HEK293 (cell line): ENCODE measurements at regions of chr10 and their contacts with region 1.

Region 1: GRCh38 chr10:69957886-69958555 is 94.6 kb upstream of the MACROH2A2 start:
- H3K4me3 ChIP-seq: no peak overlapping the region
- H3K27ac ChIP-seq: no peak overlapping the region
- H3K4me1 ChIP-seq: no peaks in the 10 kb centered on the region
- CTCF ChIP-seq: peak; percentile 53

Region 2: GRCh38 chr10:69786791-69787190 is 171.2 kb before region 1 on chr10:
- CTCF ChIA-PET with region 1: interaction called, 36 read pairs
- POLR2A ChIA-PET with region 1: no interaction called
- H3K4me3 ChIP-seq: no peak overlapping the region
- H3K27ac ChIP-seq: no peak overlapping the region
- H3K4me1 ChIP-seq: no peaks in the 10 kb centered on the region
- CTCF ChIP-seq: no peak

Region 3: DNA sequence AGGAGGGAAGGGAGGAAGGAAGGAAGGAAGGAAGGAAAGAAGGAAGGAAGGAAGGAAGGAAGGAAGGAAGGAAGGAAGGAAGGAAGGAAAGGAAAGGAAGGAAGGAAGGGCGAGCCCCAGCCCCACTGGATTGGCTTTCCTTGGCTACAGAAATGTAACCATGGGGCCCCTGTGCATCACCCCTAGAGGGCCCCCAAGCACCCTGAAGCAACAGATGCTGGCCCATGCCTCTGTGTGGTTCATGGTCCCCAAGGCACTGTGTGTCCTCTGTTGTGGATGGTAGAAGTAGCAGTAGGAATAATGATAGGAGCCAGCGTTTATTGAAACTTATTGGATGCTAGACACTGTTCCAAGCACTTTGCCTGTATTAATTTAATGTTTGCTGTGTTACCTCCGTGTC is 21.9 kb before region 1 on chr10:
- CTCF ChIA-PET with region 1: interaction called, 13 read pairs
- POLR2A ChIA-PET with region 1: no interaction called
- H3K4me3 ChIP-seq: no peak overlapping the region
- H3K27ac ChIP-seq: no peak overlapping the region
- H3K4me1 ChIP-seq: no peaks in the 10 kb centered on the region
- CTCF ChIP-seq: no peak

Region 4: GRCh38 chr10:69968830-69969229 is 10.8 kb after region 1 on chr10:
- CTCF ChIA-PET with region 1: interaction called, 18 read pairs
- POLR2A ChIA-PET with region 1: no interaction called
- H3K4me3 ChIP-seq: no peak overlapping the region
- H3K27ac ChIP-seq: no peak overlapping the region
- H3K4me1 ChIP-seq: no peaks in the 10 kb centered on the region
- CTCF ChIP-seq: peak; percentile 74

Region 5: DNA sequence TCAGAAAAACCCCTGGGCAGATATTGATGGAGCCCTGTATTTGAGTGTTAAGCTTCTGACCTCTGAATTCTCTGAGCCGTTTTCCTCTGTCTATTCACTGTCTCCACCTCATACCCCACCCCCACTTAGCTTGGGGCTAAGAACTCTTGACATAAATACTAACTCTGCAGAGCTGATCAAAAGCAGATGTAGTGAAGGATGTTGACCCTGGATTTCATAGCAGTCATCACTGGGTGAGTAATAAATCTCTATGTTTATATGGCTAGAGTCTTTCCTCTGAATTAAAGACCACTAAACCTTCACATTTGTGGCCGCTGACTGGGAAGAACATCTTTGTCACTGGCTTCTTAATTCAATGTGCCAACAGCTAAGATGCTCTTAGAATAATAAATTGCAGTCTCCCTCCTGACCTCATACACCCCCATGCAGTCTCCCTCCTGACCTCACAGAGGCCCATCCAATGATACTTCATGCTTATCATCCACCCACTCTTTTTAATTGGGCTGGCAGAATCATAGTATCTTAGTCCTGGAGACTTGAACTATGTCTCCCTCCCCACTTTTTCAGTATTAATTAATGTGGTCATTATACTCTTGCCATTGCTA is 16.6 kb after region 1 on chr10:
- CTCF ChIA-PET with region 1: interaction called, 18 read pairs
- POLR2A ChIA-PET with region 1: no interaction called
- H3K4me3 ChIP-seq: no peak overlapping the region
- H3K27ac ChIP-seq: no peak overlapping the region
- H3K4me1 ChIP-seq: peaks cover 8% of the 10 kb centered on the region
- CTCF ChIP-seq: no peak

Region 6: DNA sequence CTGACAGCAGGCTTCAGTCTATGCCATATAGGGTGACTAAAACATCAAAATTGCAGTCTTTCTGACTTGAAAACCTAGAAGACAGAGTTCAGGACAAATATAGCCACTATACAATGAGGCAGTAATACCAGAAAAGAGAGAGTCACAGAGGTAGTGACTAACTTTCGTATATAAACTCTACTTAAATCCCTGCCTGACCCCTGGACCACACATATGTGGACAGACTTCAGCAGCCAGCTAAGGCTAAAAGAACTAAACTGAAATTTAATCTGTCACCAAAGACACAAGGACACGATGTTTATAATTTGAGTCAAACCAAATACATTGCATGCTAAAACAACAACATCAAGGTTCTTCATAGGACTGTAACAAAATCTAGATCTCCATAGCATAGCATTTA is 30.1 kb after region 1 on chr10:
- CTCF ChIA-PET with region 1: interaction called, 12 read pairs
- POLR2A ChIA-PET with region 1: no interaction called
- H3K4me3 ChIP-seq: no peak overlapping the region
- H3K27ac ChIP-seq: no peak overlapping the region
- H3K4me1 ChIP-seq: no peaks in the 10 kb centered on the region
- CTCF ChIP-seq: no peak